ENCODE measurements at regions of chr7 and their contacts with region 1.

Region 1: GRCh38 chr7:143380255-143380645 is 895 bp upstream of the ZYX start:
- DNase-seq: peak; percentile 93
- H3K4me3 Mint-ChIP-seq: peak overlapping the region; percentile 82
- H3K27ac Mint-ChIP-seq: peak overlapping the region; percentile 90
- H3K4me1 Mint-ChIP-seq: peaks cover 37% of the 10 kb centered on the region
- H3K27me3 Mint-ChIP-seq: no peaks in the 10 kb centered on the region

Region 2: GRCh38 chr7:143287935-143288826 is 92.1 kb before region 1 on chr7 and contains the start of gene CASP2:
- CTCF ChIA-PET with region 1: interaction called, 7 read pairs
- POLR2A ChIA-PET with region 1: interaction called, 5 read pairs
- intact Hi-C with region 1: loop called (anchors 1 kb)
- DNase-seq: peak; percentile 99
- H3K4me3 Mint-ChIP-seq: peak within 1 kb of the TSS; percentile 93
- H3K27ac Mint-ChIP-seq: peak within 1 kb of the TSS; percentile 97
- H3K4me1 Mint-ChIP-seq: peaks cover 44% of the 10 kb centered on the region
- H3K27me3 Mint-ChIP-seq: no peaks in the 10 kb centered on the region
- total RNA-seq, gene CASP2: 117 to 129 TPM

Region 3: DNA sequence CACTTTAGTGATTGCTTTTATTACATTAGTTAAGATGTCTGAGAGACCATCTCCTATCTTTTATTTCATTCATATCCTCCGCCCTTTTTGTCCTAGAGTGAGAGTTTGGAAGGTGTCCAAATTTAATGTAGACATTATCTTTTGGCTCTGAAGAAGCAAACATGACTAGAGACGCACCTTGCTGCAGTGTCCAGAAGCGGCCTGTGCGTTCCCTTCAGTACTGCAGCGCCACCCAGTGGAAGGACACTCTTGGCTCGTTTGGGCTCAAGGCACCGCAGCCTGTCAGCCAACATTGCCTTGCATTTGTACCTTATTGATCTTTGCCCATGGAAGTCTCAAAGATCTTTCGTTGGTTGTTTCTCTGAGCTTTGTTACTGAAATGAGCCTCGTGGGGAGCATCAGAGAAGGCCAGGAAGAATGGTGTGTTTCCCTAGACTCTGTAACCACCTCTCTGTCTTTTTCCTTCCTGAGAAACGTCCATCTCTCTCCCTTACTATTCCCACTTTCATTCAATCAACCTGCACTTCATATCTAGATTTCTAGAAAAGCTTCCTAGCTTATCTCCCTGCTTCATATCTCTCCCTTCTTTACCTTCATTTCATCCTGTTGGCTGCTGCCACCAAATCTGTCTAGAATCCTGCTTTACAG is 74.7 kb before region 1 on chr7:
- CTCF ChIA-PET with region 1: no interaction called
- POLR2A ChIA-PET with region 1: no interaction called
- intact Hi-C with region 1: loop called (anchors 2 kb)
- DNase-seq: peak; percentile 82
- H3K4me3 Mint-ChIP-seq: no peak overlapping the region
- H3K27ac Mint-ChIP-seq: peak overlapping the region; percentile 64
- H3K4me1 Mint-ChIP-seq: peaks cover 49% of the 10 kb centered on the region
- H3K27me3 Mint-ChIP-seq: no peaks in the 10 kb centered on the region

Region 4: DNA sequence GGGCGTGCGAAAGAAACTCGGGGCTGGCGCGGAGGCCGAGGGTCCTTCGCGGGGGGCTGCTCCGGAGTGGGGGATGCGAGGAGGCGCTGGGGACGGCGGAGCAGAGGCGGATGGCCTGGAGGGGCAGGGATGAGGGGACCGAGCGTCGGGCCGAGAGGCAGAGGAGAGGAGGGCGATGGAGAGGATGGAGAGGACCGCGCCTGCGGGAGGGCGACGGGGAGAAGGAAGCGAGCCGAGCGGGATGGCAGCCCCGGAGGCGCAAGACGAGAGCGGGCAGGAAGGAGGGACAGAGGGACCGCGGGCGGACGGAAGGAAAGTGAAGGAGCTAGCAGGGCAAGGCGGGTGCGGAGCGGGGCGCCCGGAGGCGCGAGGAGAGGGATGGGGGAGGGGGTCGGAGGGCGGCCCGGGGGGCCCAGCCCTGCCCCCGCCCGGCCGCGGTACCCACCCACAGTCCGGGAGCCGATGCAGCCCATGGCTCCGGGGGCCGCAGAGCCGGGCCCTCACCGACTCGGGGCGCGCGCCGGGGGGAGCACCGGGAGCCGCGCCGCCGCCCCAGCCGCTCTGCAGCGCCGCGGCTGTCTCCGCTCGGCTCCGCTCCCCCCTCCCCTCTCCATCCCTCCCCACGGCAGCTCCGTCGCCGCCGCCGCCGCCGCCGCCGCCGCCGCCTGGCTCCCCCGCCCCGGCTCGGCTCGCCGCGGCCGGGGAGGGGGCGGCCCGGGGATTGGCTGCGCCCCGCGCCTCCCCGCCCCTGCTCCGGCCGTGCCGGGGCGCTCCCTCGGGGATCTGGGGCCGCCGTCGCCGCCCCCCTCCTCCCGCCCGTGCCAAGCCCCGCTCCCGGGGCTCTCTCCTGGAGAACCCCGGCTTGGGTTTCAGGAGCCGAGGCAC is 17.9 kb before region 1 on chr7 and contains the start of gene FAM131B:
- CTCF ChIA-PET with region 1: interaction called, 8 read pairs
- POLR2A ChIA-PET with region 1: interaction called, 4 read pairs
- intact Hi-C with region 1: loop called (anchors 2 kb)
- DNase-seq: peak; percentile 48
- H3K4me3 Mint-ChIP-seq: peak within 1 kb of the TSS; percentile 79
- H3K27ac Mint-ChIP-seq: no peak within 1 kb of the TSS
- H3K4me1 Mint-ChIP-seq: peaks cover 4% of the 10 kb centered on the region
- H3K27me3 Mint-ChIP-seq: peaks cover 17% of the 10 kb centered on the region
- total RNA-seq, gene FAM131B: 1.9 to 2.3 TPM

Region 5: GRCh38 chr7:143408686-143409561 is 28.7 kb after region 1 on chr7 and contains the start of gene EPHA1:
- CTCF ChIA-PET with region 1: interaction called, 26 read pairs
- POLR2A ChIA-PET with region 1: interaction called, 8 read pairs
- intact Hi-C with region 1: loop called (anchors 1 kb)
- DNase-seq: peak; percentile 63
- H3K4me3 Mint-ChIP-seq: peak within 1 kb of the TSS; percentile 70
- H3K27ac Mint-ChIP-seq: peak within 1 kb of the TSS; percentile 75
- H3K4me1 Mint-ChIP-seq: peaks cover 48% of the 10 kb centered on the region
- H3K27me3 Mint-ChIP-seq: no peaks in the 10 kb centered on the region
- total RNA-seq, gene EPHA1: 2.9 to 4.3 TPM

Region 6: GRCh38 chr7:143416565-143417149 is 36.4 kb after region 1 on chr7:
- CTCF ChIA-PET with region 1: interaction called, 11 read pairs
- POLR2A ChIA-PET with region 1: no interaction called
- intact Hi-C with region 1: loop called (anchors 2 kb)
- DNase-seq: no peak
- H3K4me3 Mint-ChIP-seq: no peak overlapping the region
- H3K27ac Mint-ChIP-seq: no peak overlapping the region
- H3K4me1 Mint-ChIP-seq: peaks cover 6% of the 10 kb centered on the region
- H3K27me3 Mint-ChIP-seq: no peaks in the 10 kb centered on the region

Region 7: GRCh38 chr7:143490717-143491306 is 110.6 kb after region 1 on chr7:
- CTCF ChIA-PET with region 1: no interaction called
- POLR2A ChIA-PET with region 1: no interaction called
- intact Hi-C with region 1: no loop called
- DNase-seq: peak; percentile 40
- H3K4me3 Mint-ChIP-seq: no peak overlapping the region
- H3K27ac Mint-ChIP-seq: no peak overlapping the region
- H3K4me1 Mint-ChIP-seq: peaks cover 26% of the 10 kb centered on the region
- H3K27me3 Mint-ChIP-seq: no peaks in the 10 kb centered on the region

Region 8: GRCh38 chr7:144818511-144818910 is 1438.3 kb after region 1 on chr7:
- CTCF ChIA-PET with region 1: no interaction called
- POLR2A ChIA-PET with region 1: no interaction called
- intact Hi-C with region 1: loop called (anchors 5 kb)
- DNase-seq: peak; percentile 66
- H3K4me3 Mint-ChIP-seq: no peak overlapping the region
- H3K27ac Mint-ChIP-seq: peak overlapping the region; percentile 90
- H3K4me1 Mint-ChIP-seq: peaks cover 68% of the 10 kb centered on the region
- H3K27me3 Mint-ChIP-seq: no peaks in the 10 kb centered on the region